GM10248 (cell line): ENCODE measurements at regions of chr5 and their contacts with region 1.

Region 1: DNA sequence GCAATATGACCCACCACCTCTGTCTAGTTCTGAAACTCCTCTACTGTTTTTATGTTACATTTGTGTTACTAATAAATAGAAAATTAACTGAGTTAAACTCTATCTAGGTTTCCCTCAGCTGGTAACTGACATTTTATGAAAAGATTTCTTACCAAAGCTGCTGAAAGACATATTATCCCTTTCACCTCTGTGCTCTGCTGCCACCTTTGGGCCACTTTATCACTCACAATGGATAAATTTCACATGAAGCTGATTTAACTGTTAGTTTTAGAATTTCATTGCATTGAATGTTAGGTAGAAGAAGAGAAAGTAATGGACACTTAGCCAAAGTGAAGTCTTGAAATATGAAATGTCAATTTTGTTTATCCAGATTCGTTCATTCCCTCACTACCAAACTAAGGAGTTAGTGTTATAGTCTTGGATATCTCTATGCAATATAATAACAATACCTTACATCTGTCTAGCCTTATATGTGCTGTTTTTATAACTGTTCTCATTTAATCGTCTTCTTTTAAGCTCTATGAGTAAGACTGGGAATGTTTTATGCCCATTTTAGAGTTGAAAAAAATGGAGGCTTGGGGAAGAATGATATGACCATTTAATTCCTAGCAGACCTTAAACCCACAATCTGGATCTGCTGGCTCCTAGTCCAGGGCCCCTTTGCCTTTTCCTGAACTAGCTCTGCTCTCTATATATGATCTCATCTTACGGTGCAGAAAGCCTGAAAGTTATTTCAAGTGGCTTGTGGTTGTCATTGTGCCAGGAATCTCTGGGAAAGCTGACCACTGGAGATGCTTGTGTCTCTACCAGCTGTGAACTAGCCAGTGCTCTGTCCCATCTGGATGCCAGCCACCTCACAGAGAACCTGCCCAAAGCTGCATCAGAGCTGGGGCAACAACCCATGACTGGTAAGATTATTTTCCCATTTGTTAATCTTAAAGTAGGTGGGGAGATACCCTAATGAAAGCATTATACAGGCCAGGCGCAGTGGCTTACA is 97.1 kb downstream of the GOLPH3 start:
- DNase-seq: peak; percentile 45
- CTCF ChIP-seq: peak; percentile 71

Region 2: GRCh38 chr5:31825518-31826068 is 251.4 kb before region 1 on chr5:
- CTCF ChIA-PET with region 1: interaction called, 15 read pairs
- POLR2A ChIA-PET with region 1: no interaction called
- DNase-seq: peak; percentile 30
- CTCF ChIP-seq: peak; percentile 64

Region 3: GRCh38 chr5:32087086-32088082 is 10.4 kb after region 1 on chr5:
- CTCF ChIA-PET with region 1: interaction called, 16 read pairs
- POLR2A ChIA-PET with region 1: no interaction called
- DNase-seq: no peak
- CTCF ChIP-seq: no peak